ENCODE measurements at regions of chr14 and their contacts with region 1.

Region 1: GRCh38 chr14:96626916-96627315 is 124.7 kb downstream of the PAPOLA start:
- DNase-seq: peak; percentile 37
- ATAC-seq: no peak

Region 2: GRCh38 chr14:95784137-95784536 is 842.8 kb before region 1 on chr14:
- intact Hi-C with region 1: loop called (anchors 10 kb)
- DNase-seq: no peak
- ATAC-seq: no peak

Region 3: GRCh38 chr14:96538097-96538989 is 88.6 kb before region 1 on chr14:
- intact Hi-C with region 1: no loop called
- DNase-seq: no peak
- ATAC-seq: no peak